GM12878 (cell line): ENCODE measurements at regions of chr14 and their contacts with region 1.

Region 1: GRCh38 chr14:65462411-65462810 is 49.9 kb downstream of the FUT8 start:
- DNase-seq: peak; percentile 85
- ATAC-seq: peak; percentile 91
- H3K4me3 ChIP-seq: no peak overlapping the region
- H3K27ac ChIP-seq: peak overlapping the region; percentile 82
- H3K4me1 ChIP-seq: peaks cover 24% of the 10 kb centered on the region
- H3K27me3 ChIP-seq: no peaks in the 10 kb centered on the region
- CTCF ChIP-seq: no peak
- EP300 ChIP-seq: peak; percentile 56 to 67; a peak in 3 of 4 replicates
- POLR2A ChIP-seq: no peak
- RAD21 ChIP-seq: peak; percentile 28; the same call in 1 of the 2 replicates

Region 2: GRCh38 chr14:65329911-65330310 is 132.5 kb before region 1 on chr14:
- CTCF ChIA-PET with region 1: no interaction called
- POLR2A ChIA-PET with region 1: no interaction called
- RAD21 ChIA-PET with region 1: no interaction called
- SMC1A ChIA-PET with region 1: no interaction called
- in situ Hi-C with region 1: no loop called
- intact Hi-C with region 1: no loop called
- DNase-seq: no peak
- ATAC-seq: peak; percentile 52
- H3K4me3 ChIP-seq: no peak overlapping the region
- H3K27ac ChIP-seq: no peak overlapping the region
- H3K4me1 ChIP-seq: peaks cover 31% of the 10 kb centered on the region
- H3K27me3 ChIP-seq: no peaks in the 10 kb centered on the region
- CTCF ChIP-seq: no peak
- EP300 ChIP-seq: no peak
- POLR2A ChIP-seq: no peak
- RAD21 ChIP-seq: no peak

Region 3: GRCh38 chr14:65396082-65396910 is 66.1 kb before region 1 on chr14:
- CTCF ChIA-PET with region 1: no interaction called
- POLR2A ChIA-PET with region 1: no interaction called
- RAD21 ChIA-PET with region 1: no interaction called
- SMC1A ChIA-PET with region 1: no interaction called
- in situ Hi-C with region 1: no loop called
- intact Hi-C with region 1: no loop called
- DNase-seq: no peak
- ATAC-seq: peak; percentile 24; the same call in 1 of the 3 replicates
- H3K4me3 ChIP-seq: no peak overlapping the region
- H3K27ac ChIP-seq: no peak overlapping the region
- H3K4me1 ChIP-seq: no peaks in the 10 kb centered on the region
- H3K27me3 ChIP-seq: no peaks in the 10 kb centered on the region
- CTCF ChIP-seq: no peak
- EP300 ChIP-seq: no peak
- POLR2A ChIP-seq: no peak
- RAD21 ChIP-seq: no peak

Region 4: DNA sequence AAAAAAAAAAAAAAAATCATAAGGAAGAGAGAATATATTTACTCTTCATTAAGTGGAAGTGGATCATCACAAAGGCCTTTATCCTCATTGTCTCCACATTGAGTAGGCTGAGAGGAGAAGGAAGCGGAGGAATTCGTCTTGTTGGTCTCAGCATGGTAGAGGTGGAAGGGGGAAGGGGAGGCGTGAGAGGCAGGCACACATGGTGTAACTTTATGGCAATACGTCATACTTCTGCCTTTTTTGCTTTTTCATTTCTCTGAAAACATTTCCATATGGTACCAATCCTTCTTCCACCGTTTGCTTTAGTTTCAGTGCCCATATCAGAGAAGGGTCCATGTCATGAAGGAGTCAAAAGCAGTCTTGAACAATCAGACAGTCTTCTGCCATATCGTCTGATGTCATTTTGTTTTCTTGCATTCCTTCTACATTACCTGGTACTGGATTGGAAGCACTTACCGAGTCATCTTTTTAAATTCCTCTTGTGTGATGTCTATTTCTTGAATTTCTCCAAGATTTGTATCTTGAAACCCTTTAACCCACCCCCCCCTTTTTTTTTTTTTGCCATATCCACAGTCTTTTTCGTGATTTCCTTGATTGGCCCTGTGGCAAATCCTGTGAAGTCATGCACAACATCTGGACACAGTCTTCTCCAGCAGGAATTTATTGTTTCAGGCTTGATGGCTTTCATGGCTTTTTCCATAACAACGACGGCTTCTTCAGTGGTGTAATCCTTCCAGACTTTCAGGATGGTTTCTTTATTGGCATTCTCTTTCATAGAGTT is 41.0 kb before region 1 on chr14:
- CTCF ChIA-PET with region 1: interaction called, 27 read pairs
- POLR2A ChIA-PET with region 1: no interaction called
- RAD21 ChIA-PET with region 1: interaction called, 31 read pairs
- SMC1A ChIA-PET with region 1: interaction called, 27 read pairs
- in situ Hi-C with region 1: no loop called
- intact Hi-C with region 1: loop called (anchors 1 kb)
- DNase-seq: no peak
- ATAC-seq: no peak
- H3K4me3 ChIP-seq: no peak overlapping the region
- H3K27ac ChIP-seq: no peak overlapping the region
- H3K4me1 ChIP-seq: 0 out of 2 replicates have a peak, but pooled peaks cover 3% of the 10 kb centered on the region
- H3K27me3 ChIP-seq: no peaks in the 10 kb centered on the region
- CTCF ChIP-seq: no peak
- EP300 ChIP-seq: no peak
- POLR2A ChIP-seq: no peak
- RAD21 ChIP-seq: no peak

Region 5: DNA sequence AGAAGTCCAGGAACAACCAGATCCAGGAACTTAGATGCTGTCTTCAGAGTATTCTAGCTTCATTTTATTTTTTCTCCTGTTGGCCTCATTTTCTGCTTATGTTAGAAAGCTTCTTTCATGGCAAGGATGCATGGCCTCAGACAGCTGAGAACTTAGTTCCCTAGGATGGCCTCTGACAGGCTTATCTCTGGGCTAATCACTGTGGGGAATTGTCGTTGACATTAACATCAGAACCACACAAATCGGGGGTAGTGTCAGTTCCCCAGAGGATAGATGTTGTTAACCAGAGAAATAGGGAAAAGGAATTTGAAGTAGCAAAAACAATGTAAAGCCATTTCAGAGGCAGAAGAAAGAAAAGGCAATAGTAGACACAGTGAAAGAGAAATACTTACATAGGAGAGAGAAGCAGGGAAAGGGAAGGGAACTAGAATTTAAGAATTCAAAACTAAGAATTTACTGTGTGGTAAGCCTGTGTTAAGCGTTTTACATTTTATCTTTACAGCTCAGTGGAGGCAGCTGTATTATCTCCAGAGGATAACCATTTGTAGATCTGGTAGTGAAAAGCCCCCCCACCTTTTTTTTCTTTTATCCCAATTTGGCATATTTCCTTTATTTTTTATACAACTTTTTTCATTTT is 28.1 kb before region 1 on chr14:
- CTCF ChIA-PET with region 1: interaction called, 5 read pairs
- POLR2A ChIA-PET with region 1: interaction called, 4 read pairs
- RAD21 ChIA-PET with region 1: interaction called, 6 read pairs
- SMC1A ChIA-PET with region 1: interaction called, 49 read pairs
- in situ Hi-C with region 1: no loop called
- intact Hi-C with region 1: no loop called
- DNase-seq: no peak
- ATAC-seq: no peak
- H3K4me3 ChIP-seq: no peak overlapping the region
- H3K27ac ChIP-seq: peak overlapping the region; percentile 71
- H3K4me1 ChIP-seq: peaks cover 39% of the 10 kb centered on the region
- H3K27me3 ChIP-seq: no peaks in the 10 kb centered on the region
- CTCF ChIP-seq: no peak
- EP300 ChIP-seq: no peak
- POLR2A ChIP-seq: no peak
- RAD21 ChIP-seq: no peak

Region 6: DNA sequence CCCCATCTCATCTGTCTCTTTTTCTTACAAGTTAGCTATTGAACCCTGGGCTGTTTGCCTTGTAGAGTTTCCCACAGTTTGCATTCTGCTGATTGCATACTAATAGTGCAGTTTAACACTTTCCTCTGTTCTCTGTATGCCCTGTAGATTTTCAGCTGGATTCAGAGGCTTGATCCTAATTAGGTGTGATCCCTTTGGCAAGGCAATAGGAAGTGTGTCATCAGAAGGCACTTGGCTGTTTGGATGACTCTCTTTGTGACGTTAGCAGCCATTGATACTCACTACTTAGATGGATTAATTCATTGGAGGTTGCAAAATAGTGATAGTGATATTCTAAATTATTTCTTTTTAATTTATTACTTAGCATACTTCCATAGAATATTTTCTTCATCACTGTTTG is 16.3 kb before region 1 on chr14:
- CTCF ChIA-PET with region 1: interaction called, 10 read pairs
- POLR2A ChIA-PET with region 1: interaction called, 7 read pairs
- RAD21 ChIA-PET with region 1: interaction called, 3 read pairs
- SMC1A ChIA-PET with region 1: interaction called, 49 read pairs
- in situ Hi-C with region 1: no loop called
- intact Hi-C with region 1: no loop called
- DNase-seq: no peak
- ATAC-seq: no peak
- H3K4me3 ChIP-seq: no peak overlapping the region
- H3K27ac ChIP-seq: no peak overlapping the region
- H3K4me1 ChIP-seq: no peaks in the 10 kb centered on the region
- H3K27me3 ChIP-seq: no peaks in the 10 kb centered on the region
- CTCF ChIP-seq: no peak
- EP300 ChIP-seq: no peak
- POLR2A ChIP-seq: no peak
- RAD21 ChIP-seq: no peak

Region 7: GRCh38 chr14:65502676-65503124 is 40.3 kb after region 1 on chr14:
- CTCF ChIA-PET with region 1: no interaction called
- POLR2A ChIA-PET with region 1: no interaction called
- RAD21 ChIA-PET with region 1: interaction called, 7 read pairs
- SMC1A ChIA-PET with region 1: interaction called, 5 read pairs
- in situ Hi-C with region 1: no loop called
- intact Hi-C with region 1: loop called (anchors 5 kb)
- DNase-seq: peak; percentile 62
- ATAC-seq: peak; percentile 79
- H3K4me3 ChIP-seq: no peak overlapping the region
- H3K27ac ChIP-seq: peak overlapping the region; percentile 65
- H3K4me1 ChIP-seq: peaks cover 21% of the 10 kb centered on the region; the same call in 1 of the 2 replicates
- H3K27me3 ChIP-seq: no peaks in the 10 kb centered on the region
- CTCF ChIP-seq: no peak
- EP300 ChIP-seq: peak; percentile 25 to 45; a peak in 1 of 4 replicates
- POLR2A ChIP-seq: no peak
- RAD21 ChIP-seq: no peak